Psoas muscle (tissue), 8 donors: ENCODE measurements at regions of chr1 and their contacts with region 1.

Region 1: GRCh38 chr1:236759252-236759859 is 35.7 kb upstream of the MTR start:
- DNase-seq: no peak
- ATAC-seq: peak in 2 of 4 donors; percentile 22 to 36
- H3K4me3 ChIP-seq: no peak overlapping the region
- H3K27ac ChIP-seq: no peak overlapping the region
- H3K4me1 ChIP-seq: no peaks in the 10 kb centered on the region
- H3K27me3 ChIP-seq: no peaks in the 10 kb centered on the region
- CTCF ChIP-seq: peak; percentile 56

Region 2: GRCh38 chr1:236639686-236640085 is 119.7 kb before region 1 on chr1:
- intact Hi-C with region 1: no loop called
- DNase-seq: no peak
- ATAC-seq: peak in 3 of 4 donors; percentile 66 to 69 (median 67)
- H3K4me3 ChIP-seq: peak overlapping the region; percentile 58
- H3K27ac ChIP-seq: peak overlapping the region; percentile 73
- H3K4me1 ChIP-seq: peaks cover 11% of the 10 kb centered on the region
- H3K27me3 ChIP-seq: no peaks in the 10 kb centered on the region
- CTCF ChIP-seq: no peak

Region 3: DNA sequence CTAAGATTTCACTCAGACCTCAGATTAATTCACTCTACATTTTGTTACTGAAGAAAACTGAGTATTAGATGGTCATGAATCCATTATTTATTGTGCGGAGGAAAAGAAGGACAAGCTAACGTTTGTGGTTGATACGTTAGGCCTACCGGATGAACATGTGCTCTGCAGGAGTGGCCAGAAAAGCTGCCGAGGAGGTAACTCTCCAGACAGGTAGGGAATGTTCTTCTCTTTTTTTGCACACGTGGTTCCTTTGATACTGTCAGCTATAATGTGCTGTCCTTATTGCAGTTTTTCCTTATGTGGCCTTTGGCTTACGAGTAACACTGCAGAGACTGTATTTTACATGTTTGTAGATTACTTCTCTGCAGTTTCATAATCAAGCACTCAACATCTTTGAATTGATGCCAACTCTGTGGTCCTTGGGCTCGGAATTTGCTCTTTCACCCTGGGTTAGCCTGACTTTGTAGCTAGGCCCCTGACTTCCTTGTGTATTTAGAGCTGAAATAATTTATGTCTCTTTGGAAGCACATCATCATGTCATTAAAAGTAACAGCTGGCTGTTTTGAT is 49.3 kb after region 1 on chr1:
- intact Hi-C with region 1: no loop called
- DNase-seq: no peak
- ATAC-seq: no peak
- H3K4me3 ChIP-seq: no peak overlapping the region
- H3K27ac ChIP-seq: peak overlapping the region; percentile 57
- H3K4me1 ChIP-seq: peaks cover 16% of the 10 kb centered on the region
- H3K27me3 ChIP-seq: no peaks in the 10 kb centered on the region
- CTCF ChIP-seq: no peak

Region 4: GRCh38 chr1:236819856-236820255 is 60.5 kb after region 1 on chr1:
- intact Hi-C with region 1: no loop called
- DNase-seq: no peak
- ATAC-seq: no peak
- H3K4me3 ChIP-seq: no peak overlapping the region
- H3K27ac ChIP-seq: no peak overlapping the region
- H3K4me1 ChIP-seq: no peaks in the 10 kb centered on the region
- H3K27me3 ChIP-seq: no peaks in the 10 kb centered on the region
- CTCF ChIP-seq: no peak

Region 5: DNA sequence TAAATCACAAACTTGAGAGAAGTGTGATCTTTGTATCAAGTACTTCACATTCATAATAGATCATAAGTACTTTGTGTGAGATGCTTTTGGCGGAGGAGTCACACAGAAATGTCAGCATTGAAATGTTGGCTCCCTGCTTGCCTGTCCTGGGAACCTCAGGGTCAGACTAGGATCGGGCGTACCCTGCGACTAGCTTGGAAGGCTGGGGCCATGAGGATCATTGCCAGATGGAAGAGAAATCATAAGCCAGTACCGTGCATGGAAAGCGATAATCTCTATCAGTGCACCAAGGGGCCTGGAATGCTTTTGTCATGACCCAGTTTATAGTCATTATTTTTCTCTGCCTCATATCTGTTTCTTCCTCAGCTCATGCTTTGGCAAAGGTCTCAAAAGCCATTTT is 71.2 kb after region 1 on chr1:
- intact Hi-C with region 1: loop called in 1 of 2 experiments (anchors 10 kb)
- DNase-seq: peak; percentile 18 to 43
- ATAC-seq: peak in 3 of 4 donors; percentile 47 to 63 (median 58)
- H3K4me3 ChIP-seq: no peak overlapping the region
- H3K27ac ChIP-seq: no peak overlapping the region
- H3K4me1 ChIP-seq: peaks cover 4% of the 10 kb centered on the region
- H3K27me3 ChIP-seq: no peaks in the 10 kb centered on the region
- CTCF ChIP-seq: no peak

Region 6: DNA sequence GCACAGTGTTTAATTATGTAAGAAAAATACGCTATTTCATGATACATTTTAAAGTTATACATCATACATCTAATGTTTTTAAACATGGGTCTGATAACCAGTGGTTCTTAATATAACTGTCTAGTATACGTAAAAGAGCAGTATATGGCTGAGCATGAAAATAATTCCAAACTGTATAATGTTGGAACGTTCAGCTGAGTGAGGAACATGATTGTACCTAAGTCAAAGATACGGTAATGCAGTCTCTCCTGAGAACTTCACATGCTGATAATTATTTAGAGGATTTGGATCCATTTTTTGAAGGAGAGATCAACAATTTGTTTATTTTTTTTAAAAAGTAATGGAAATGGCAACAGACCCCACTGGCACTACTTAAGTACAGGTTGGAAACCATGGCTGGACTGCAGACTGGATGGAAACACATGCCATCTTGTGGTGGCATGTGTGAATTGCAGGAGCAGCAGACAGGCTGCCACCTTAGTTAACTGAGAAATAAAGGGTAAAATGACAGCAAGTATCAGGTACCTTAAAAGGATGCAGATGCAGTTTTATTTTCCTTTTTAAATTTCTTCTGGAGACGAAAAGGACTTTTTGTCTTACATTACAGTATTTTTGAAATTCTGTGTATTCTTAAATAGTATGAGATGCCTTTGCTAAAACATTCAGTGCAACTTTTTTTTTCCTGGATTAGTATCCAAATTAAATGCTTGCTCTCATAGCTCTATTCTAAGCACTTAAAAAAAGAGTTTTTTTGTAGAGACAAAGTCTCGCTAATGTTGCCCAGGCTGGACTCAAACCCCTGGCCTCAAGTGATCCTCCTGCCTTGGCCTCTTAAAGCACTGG is 109.5 kb after region 1 on chr1:
- intact Hi-C with region 1: loop called in 1 of 2 experiments (anchors 10 kb)
- DNase-seq: no peak
- ATAC-seq: peak in 1 of 4 donors; percentile 47
- H3K4me3 ChIP-seq: no peak overlapping the region
- H3K27ac ChIP-seq: no peak overlapping the region
- H3K4me1 ChIP-seq: no peaks in the 10 kb centered on the region
- H3K27me3 ChIP-seq: no peaks in the 10 kb centered on the region
- CTCF ChIP-seq: peak; percentile 86

Region 7: GRCh38 chr1:237562242-237562823 is 803.0 kb after region 1 on chr1:
- intact Hi-C with region 1: loop called in 1 of 2 experiments (anchors 5 kb)
- DNase-seq: no peak
- ATAC-seq: no peak
- H3K4me3 ChIP-seq: no peak overlapping the region
- H3K27ac ChIP-seq: no peak overlapping the region
- H3K4me1 ChIP-seq: no peaks in the 10 kb centered on the region
- H3K27me3 ChIP-seq: no peaks in the 10 kb centered on the region
- CTCF ChIP-seq: peak; percentile 39